Activated CD8-positive, alpha-beta T cell treated with anti-CD3 and anti-CD28 coated beads, Interleukin-2, amount 10 ng/mL, durations not matched to agents 7 days and 5 days (primary cell): ENCODE measurements at regions of chr14 and their contacts with region 1.

Region 1: GRCh38 chr14:22556990-22557623 is 31.9 kb downstream of the DAD1 start:
- DNase-seq: peak; percentile 94
- ATAC-seq: peak; percentile 24
- H3K4me3 Mint-ChIP-seq: peak overlapping the region; percentile 76
- H3K27ac Mint-ChIP-seq: peak overlapping the region; percentile 97
- H3K4me1 Mint-ChIP-seq: peaks cover 90% of the 10 kb centered on the region
- H3K27me3 Mint-ChIP-seq: no peaks in the 10 kb centered on the region

Region 2: DNA sequence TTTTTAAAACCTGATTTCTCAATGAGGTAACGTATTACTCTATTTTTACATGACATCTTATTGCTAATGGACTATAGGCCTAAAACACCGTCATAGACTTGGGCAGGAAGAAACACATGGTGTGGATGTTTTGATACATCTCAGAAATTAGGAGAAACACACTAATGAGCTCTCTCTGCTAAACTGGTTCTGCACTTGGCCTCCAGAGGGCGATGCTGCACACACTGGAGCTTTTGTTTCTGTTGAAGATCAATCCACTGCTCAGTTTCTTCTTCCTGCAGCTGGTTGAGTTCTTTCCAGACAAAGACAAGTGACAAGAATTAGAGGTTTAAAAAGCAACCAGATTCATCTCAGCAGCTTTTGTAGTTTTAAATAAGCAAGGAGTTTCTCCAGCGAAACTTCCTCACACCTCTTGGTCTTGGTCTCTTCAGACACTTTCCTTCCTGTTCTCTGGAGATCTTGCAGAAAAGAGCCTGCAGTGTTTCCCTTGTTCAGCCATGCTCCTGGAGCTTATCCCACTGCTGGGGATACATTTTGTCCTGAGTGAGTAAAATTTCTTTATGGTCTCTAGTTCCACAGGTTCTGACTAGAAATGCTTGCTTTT is 704.9 kb before region 1 on chr14:
- CTCF ChIA-PET with region 1: interaction called, 10 read pairs
- POLR2A ChIA-PET with region 1: interaction called, 6 read pairs
- DNase-seq: peak; percentile 88
- ATAC-seq: peak; percentile 71
- H3K4me3 Mint-ChIP-seq: peak overlapping the region; percentile 77
- H3K27ac Mint-ChIP-seq: peak overlapping the region; percentile 88
- H3K4me1 Mint-ChIP-seq: peaks cover 13% of the 10 kb centered on the region
- H3K27me3 Mint-ChIP-seq: peaks cover 20% of the 10 kb centered on the region

Region 3: GRCh38 chr14:21997300-21997699 is 559.8 kb before region 1 on chr14:
- CTCF ChIA-PET with region 1: interaction called, 34 read pairs
- POLR2A ChIA-PET with region 1: interaction called, 11 read pairs
- DNase-seq: peak; percentile 63
- ATAC-seq: peak; percentile 91
- H3K4me3 Mint-ChIP-seq: peak overlapping the region; percentile 87
- H3K27ac Mint-ChIP-seq: peak overlapping the region; percentile 93
- H3K4me1 Mint-ChIP-seq: peaks cover 41% of the 10 kb centered on the region
- H3K27me3 Mint-ChIP-seq: peaks cover 3% of the 10 kb centered on the region

Region 4: DNA sequence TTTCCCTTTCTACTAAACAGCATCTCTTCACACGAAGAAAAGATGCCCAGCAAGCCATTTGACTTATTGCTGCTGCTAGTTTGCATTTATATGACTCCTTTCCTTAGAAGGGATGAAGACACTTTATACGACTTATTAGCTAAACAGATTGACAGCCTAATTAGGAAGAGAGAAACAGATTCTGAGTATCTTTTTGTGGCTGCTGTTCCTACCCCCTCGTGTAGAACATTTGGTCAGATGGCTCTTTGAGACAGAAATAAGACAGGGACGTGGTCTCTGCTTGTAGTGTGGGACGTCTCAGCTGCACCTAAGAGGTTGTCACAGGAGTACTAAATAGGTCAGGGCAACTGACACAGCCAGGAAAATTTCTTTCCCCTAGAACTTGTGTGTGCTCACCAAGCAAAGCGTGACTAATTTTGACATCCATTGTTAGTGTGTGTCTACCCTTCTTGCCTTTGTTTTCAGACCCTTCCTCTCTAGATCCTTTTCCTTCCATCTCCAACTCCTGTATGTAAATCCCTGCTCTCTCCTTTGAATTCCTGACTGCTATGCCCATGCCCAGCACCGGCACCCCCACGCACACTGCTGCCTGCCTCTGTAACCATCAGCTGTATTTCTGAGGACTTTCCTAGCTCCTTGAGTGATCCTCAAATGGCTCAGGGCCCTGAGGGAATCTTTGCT is 51.3 kb before region 1 on chr14:
- CTCF ChIA-PET with region 1: interaction called, 19 read pairs
- POLR2A ChIA-PET with region 1: interaction called, 541 read pairs
- DNase-seq: no peak
- ATAC-seq: peak; percentile 31
- H3K4me3 Mint-ChIP-seq: peak overlapping the region; percentile 84
- H3K27ac Mint-ChIP-seq: peak overlapping the region; percentile 97
- H3K4me1 Mint-ChIP-seq: peaks cover 59% of the 10 kb centered on the region
- H3K27me3 Mint-ChIP-seq: no peaks in the 10 kb centered on the region

Region 5: GRCh38 chr14:22531451-22532344 is 25.4 kb before region 1 on chr14:
- CTCF ChIA-PET with region 1: interaction called, 60 read pairs
- POLR2A ChIA-PET with region 1: interaction called, 540 read pairs
- DNase-seq: peak; percentile 49
- ATAC-seq: peak; percentile 40
- H3K4me3 Mint-ChIP-seq: peak overlapping the region; percentile 76
- H3K27ac Mint-ChIP-seq: peak overlapping the region; percentile 92
- H3K4me1 Mint-ChIP-seq: peaks cover 89% of the 10 kb centered on the region
- H3K27me3 Mint-ChIP-seq: no peaks in the 10 kb centered on the region

Region 6: DNA sequence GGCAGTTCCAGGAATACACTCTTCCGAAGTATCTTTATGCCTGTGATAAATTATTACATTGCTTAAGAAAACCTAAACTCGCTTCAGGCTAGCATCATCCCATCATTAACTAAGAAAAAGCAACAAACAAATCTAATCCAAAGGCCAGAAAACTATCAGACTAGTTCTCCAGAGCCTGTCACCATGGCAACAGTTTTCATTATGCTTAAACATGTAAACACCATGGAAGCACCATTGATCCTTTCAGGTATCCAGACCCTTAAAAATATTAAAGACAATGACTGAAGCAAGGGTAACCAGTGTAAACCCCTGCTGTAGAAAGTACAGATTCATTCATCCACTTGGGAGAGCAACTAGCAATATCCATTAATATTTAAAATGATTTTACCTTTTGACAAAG is 22.1 kb after region 1 on chr14:
- CTCF ChIA-PET with region 1: interaction called, 14 read pairs
- POLR2A ChIA-PET with region 1: no interaction called
- DNase-seq: no peak
- ATAC-seq: peak; percentile 23
- H3K4me3 Mint-ChIP-seq: no peak overlapping the region
- H3K27ac Mint-ChIP-seq: peak overlapping the region; percentile 58
- H3K4me1 Mint-ChIP-seq: peaks cover 60% of the 10 kb centered on the region
- H3K27me3 Mint-ChIP-seq: no peaks in the 10 kb centered on the region

Region 7: GRCh38 chr14:22852940-22853767 is 296.0 kb after region 1 on chr14:
- CTCF ChIA-PET with region 1: interaction called, 16 read pairs
- POLR2A ChIA-PET with region 1: interaction called, 4 read pairs
- DNase-seq: peak; percentile 91
- ATAC-seq: peak; percentile 87
- H3K4me3 Mint-ChIP-seq: peak overlapping the region; percentile 72
- H3K27ac Mint-ChIP-seq: peak overlapping the region; percentile 61
- H3K4me1 Mint-ChIP-seq: peaks cover 44% of the 10 kb centered on the region
- H3K27me3 Mint-ChIP-seq: peaks cover 18% of the 10 kb centered on the region